K562 (cell line): ENCODE measurements at regions of chr3 and their contacts with region 1.

Region 1: GRCh38 chr3:37163262-37164015 is 10.9 kb downstream of the LRRFIP2 start:
- DNase-seq: no peak
- ATAC-seq: peak; percentile 21; the same call in 2 of the 3 replicates
- H3K4me3 ChIP-seq: no peak overlapping the region
- H3K27ac ChIP-seq: no peak overlapping the region
- H3K4me1 ChIP-seq: no peaks in the 10 kb centered on the region; a peak in 1 of 5 replicates
- H3K27me3 ChIP-seq: no peaks in the 10 kb centered on the region
- CTCF ChIP-seq: no peak
- EP300 ChIP-seq: no peak
- POLR2A ChIP-seq: no peak
- RAD21 ChIP-seq: no peak

Region 2: DNA sequence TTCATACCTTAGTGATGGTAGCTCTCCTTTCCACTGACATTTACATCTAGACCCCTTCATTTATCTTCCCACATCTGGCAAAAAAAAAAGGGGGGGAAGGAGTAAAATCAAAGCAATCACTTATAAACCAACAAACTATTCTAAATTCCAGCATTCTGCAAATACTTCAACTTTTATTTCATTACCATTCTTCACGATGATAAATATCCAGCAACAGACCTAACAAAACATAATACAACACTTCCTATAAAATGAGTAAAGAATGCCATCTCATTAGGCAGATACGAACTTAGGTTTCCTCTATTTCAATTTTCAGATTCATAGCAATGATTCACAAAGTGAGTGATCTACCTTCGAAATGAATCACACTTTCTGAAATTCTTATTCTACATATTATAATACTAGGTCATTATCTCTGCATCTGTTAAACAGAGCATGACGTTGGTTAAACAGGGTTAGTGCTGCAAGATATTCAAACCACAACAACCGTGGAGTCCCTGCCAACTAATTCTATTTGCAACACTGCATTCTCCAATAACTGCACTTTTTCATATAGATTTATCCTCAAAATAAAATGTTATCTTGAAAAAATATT is 11.2 kb after region 1 on chr3 and contains the start of gene LRRFIP2:
- CTCF ChIA-PET with region 1: no interaction called
- POLR2A ChIA-PET with region 1: interaction called, 10 read pairs
- in situ Hi-C with region 1: no loop called
- intact Hi-C with region 1: no loop called
- DNase-seq: peak in 1 of 4 experiments; percentile 37
- ATAC-seq: no peak
- H3K4me3 ChIP-seq: peak within 1 kb of the TSS; percentile 93
- H3K27ac ChIP-seq: peak within 1 kb of the TSS; percentile 89
- H3K4me1 ChIP-seq: peaks cover 0 to 14% of the 10 kb centered on the region in 2 experiments; a peak in 4 of 5 replicates
- H3K27me3 ChIP-seq: no peaks in the 10 kb centered on the region
- CTCF ChIP-seq: no peak
- EP300 ChIP-seq: no peak
- POLR2A ChIP-seq: no peak
- RAD21 ChIP-seq: no peak
- polyA plus RNA-seq, gene LRRFIP2: 9.9 to 11.2 TPM

Region 3: DNA sequence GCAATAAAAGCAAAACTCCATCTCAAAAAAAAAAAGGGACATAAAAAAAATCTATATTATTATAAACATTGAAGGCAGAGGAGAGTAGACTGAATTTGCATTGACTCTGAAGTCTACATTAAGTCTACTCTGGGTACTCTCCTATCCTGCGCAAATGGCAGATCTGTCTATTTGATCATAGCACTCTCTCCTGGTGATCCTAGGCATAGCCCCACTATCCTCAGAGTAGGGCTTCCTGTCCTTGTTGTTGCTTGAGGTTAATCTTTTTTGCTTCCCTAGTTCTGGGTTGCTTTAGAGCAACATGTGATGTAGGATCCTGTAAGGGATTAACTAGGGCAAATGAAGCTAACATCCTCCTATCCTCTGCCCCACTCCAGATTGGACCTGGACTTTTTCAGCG is 93.0 kb after region 1 on chr3:
- CTCF ChIA-PET with region 1: no interaction called
- POLR2A ChIA-PET with region 1: no interaction called
- in situ Hi-C with region 1: no loop called
- intact Hi-C with region 1: no loop called
- DNase-seq: peak in 2 of 4 experiments; percentile 45 to 46
- ATAC-seq: peak; percentile 91
- H3K4me3 ChIP-seq: no peak overlapping the region
- H3K27ac ChIP-seq: no peak overlapping the region
- H3K4me1 ChIP-seq: no peaks in the 10 kb centered on the region
- H3K27me3 ChIP-seq: no peaks in the 10 kb centered on the region
- CTCF ChIP-seq: peak; percentile 43 to 55 (median 52); a peak in 5 of 6 replicates
- EP300 ChIP-seq: no peak
- POLR2A ChIP-seq: no peak
- RAD21 ChIP-seq: peak in 1 of 2 experiments; percentile 62; a peak in 2 of 4 replicates

Region 4: GRCh38 chr3:37295925-37296324 is 132.5 kb after region 1 on chr3:
- CTCF ChIA-PET with region 1: no interaction called
- POLR2A ChIA-PET with region 1: no interaction called
- in situ Hi-C with region 1: no loop called
- intact Hi-C with region 1: no loop called
- DNase-seq: no peak
- ATAC-seq: no peak
- H3K4me3 ChIP-seq: no peak overlapping the region
- H3K27ac ChIP-seq: no peak overlapping the region
- H3K4me1 ChIP-seq: peaks cover 0 to 14% of the 10 kb centered on the region in 2 experiments; a peak in 2 of 5 replicates
- H3K27me3 ChIP-seq: no peaks in the 10 kb centered on the region
- CTCF ChIP-seq: no peak
- EP300 ChIP-seq: no peak
- POLR2A ChIP-seq: no peak
- RAD21 ChIP-seq: no peak